ENCODE measurements at regions of chr4 and their contacts with region 1.

Region 1: GRCh38 chr4:37686373-37687193 is at the start of gene RELL1:
- DNase-seq: peak; percentile 100
- H3K4me3 ChIP-seq: peak within 1 kb of the TSS; percentile 68 to 95 (median 86)
- H3K27ac ChIP-seq: peak within 1 kb of the TSS; percentile 79
- H3K4me1 ChIP-seq: peaks cover 24% of the 10 kb centered on the region
- H3K27me3 ChIP-seq: no peaks in the 10 kb centered on the region
- CTCF ChIP-seq: no peak
- POLR2A ChIP-seq: no peak
- total RNA-seq, gene RELL1: 87.1 and 91.7 TPM in 2 replicates

Region 2: DNA sequence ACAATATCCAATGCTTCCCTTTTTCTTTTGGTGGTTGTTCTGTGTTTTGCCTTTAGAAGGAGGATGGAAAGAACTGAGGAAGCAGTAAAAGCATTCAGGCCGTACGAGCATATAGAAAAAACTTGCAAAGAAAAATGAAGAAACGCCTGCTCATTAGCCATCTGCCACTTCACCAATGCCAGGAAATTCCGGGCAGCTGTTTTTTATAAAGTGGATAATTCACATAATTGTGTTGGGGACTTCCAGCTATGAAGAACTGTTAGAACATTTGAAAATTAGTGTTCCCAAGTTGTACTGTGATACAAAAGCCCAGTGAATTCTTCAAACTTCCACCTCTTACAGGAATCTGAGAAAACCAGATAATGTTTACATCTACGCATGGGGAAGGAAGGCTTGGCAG is 12.1 kb before region 1 on chr4:
- CTCF ChIA-PET with region 1: interaction called, 5 read pairs
- POLR2A ChIA-PET with region 1: interaction called, 6 read pairs
- dilution Hi-C with region 1: no loop called
- intact Hi-C with region 1: loop called (anchors 1 kb)
- DNase-seq: peak; percentile 58
- H3K4me3 ChIP-seq: no peak overlapping the region
- H3K27ac ChIP-seq: peak overlapping the region; percentile 48
- H3K4me1 ChIP-seq: peaks cover 27% of the 10 kb centered on the region
- H3K27me3 ChIP-seq: no peaks in the 10 kb centered on the region
- CTCF ChIP-seq: no peak
- POLR2A ChIP-seq: no peak

Region 3: GRCh38 chr4:37847311-37847884 is 160.8 kb after region 1 on chr4:
- CTCF ChIA-PET with region 1: no interaction called
- POLR2A ChIA-PET with region 1: no interaction called
- dilution Hi-C with region 1: no loop called
- intact Hi-C with region 1: no loop called
- DNase-seq: no peak
- H3K4me3 ChIP-seq: no peak overlapping the region
- H3K27ac ChIP-seq: no peak overlapping the region
- H3K4me1 ChIP-seq: no peaks in the 10 kb centered on the region
- H3K27me3 ChIP-seq: no peaks in the 10 kb centered on the region
- CTCF ChIP-seq: no peak
- POLR2A ChIP-seq: no peak

Region 4: DNA sequence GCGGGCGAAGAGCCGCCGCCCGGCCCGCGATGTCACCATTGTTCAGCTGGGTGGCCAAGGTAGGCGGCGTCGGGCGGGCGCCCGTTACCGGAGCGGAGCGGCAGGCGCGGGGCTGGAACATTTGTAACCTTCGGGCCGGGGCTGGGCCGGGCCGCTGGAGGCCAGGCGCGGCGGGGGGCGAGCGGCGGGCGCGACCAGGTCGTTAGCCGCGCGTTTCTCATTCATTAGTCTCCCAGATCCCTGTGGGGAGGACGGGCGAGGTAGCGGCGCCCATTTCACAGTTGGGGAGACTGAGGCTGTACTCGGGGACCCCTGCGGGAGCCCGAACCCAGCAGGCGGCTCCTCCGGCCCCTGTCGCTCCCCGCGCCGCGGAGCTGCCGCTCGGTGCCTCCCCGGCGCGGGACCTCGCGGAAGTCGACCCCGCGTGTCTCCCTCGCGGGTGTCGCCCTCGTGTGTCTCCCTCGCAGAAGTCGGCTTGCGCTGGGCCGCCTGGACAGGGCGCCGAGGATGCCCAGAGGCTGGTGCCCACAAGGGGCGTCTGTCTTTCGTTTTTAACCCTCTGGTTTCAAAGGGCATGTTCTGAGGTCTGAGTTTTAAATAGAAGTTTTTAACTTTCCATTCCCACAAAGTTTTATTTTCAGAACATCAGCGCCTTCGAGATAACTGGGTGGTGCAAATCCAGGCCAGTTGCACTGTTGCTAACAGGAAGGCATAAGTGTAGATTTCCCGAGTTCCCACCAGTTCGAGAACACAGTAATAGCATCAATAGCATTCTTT is 291.1 kb after region 1 on chr4:
- CTCF ChIA-PET with region 1: no interaction called
- POLR2A ChIA-PET with region 1: no interaction called
- dilution Hi-C with region 1: no loop called
- intact Hi-C with region 1: loop called (anchors 5 kb)
- DNase-seq: peak; percentile 69
- H3K4me3 ChIP-seq: peak overlapping the region; percentile 21 to 77 (median 74)
- H3K27ac ChIP-seq: peak overlapping the region; percentile 83
- H3K4me1 ChIP-seq: peaks cover 13% of the 10 kb centered on the region
- H3K27me3 ChIP-seq: no peaks in the 10 kb centered on the region
- CTCF ChIP-seq: peak; percentile 52 to 82
- POLR2A ChIP-seq: no peak